BJ (cell line): ENCODE measurements at regions of chr6 and their contacts with region 1.

Region 1: GRCh38 chr6:3209114-3210023 is 18.1 kb downstream of the TUBB2B start:
- DNase-seq: peak; percentile 98
- H3K4me3 ChIP-seq: no peak overlapping the region
- H3K27me3 ChIP-seq: no peaks in the 10 kb centered on the region
- CTCF ChIP-seq: peak; percentile 38

Region 2: GRCh38 chr6:3157131-3157927 is 52.0 kb before region 1 on chr6 and contains the start of gene TUBB2A:
- CTCF ChIA-PET with region 1: interaction called, 16 read pairs
- POLR2A ChIA-PET with region 1: interaction called, 20 read pairs
- DNase-seq: no peak
- H3K4me3 ChIP-seq: peak within 1 kb of the TSS; percentile 95
- H3K27me3 ChIP-seq: no peaks in the 10 kb centered on the region
- CTCF ChIP-seq: peak; percentile 21; the same call in 1 of the 2 replicates
- polyA plus RNA-seq, gene TUBB2A: 138 and 184 TPM in 2 replicates

Region 3: DNA sequence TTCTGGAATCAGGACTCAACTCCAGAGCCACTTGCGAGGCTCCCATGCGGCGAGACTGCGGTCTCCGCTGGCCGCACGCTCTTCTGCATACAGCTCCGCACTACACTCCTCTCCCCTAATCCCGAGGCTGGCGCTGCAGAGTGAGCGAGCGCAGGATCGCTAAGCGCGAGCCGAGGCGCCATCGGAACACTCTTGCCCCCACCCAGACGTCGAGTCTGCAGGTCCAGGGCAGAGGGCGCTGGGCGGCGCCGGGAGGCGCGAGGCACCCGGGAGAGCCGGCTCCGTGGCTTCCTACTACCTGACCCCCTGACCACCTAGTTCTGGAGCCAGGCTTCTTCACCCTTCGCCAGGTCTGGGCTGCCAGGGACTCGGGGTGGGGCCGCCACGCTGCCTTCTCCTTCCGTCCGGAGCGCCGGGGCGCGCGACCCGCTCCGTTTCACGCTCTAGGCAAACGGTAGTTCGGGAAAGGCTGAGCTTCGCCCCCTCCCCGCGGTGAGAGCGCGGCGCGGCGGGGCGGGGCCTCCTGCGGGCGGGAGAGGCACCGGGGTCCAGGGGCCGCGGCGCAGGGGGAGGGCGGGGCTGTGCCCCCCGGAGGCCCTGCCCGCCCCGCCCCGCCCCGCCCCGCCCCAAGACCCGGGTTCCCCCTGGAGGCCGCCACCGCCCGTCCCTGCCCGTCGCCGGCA is 46.7 kb before region 1 on chr6:
- CTCF ChIA-PET with region 1: interaction called, 16 read pairs
- POLR2A ChIA-PET with region 1: interaction called, 20 read pairs
- DNase-seq: no peak
- H3K4me3 ChIP-seq: peak overlapping the region; percentile 74
- H3K27me3 ChIP-seq: no peaks in the 10 kb centered on the region
- CTCF ChIP-seq: peak; percentile 33